ENCODE measurements at regions of chr17 and their contacts with region 1.

Region 1: GRCh38 chr17:44324571-44325275 is at the start of gene SLC25A39:
- DNase-seq: peak; percentile 88 to 98 (median 95)
- ATAC-seq: peak; percentile 70 to 75
- H3K4me3 Mint-ChIP-seq: peak within 1 kb of the TSS; percentile 88 to 95 (median 92)
- H3K27ac Mint-ChIP-seq: peak within 1 kb of the TSS; percentile 90 to 98 (median 96)
- H3K4me1 Mint-ChIP-seq: peaks cover 6 to 42% (median 16%) of the 10 kb centered on the region in 4 donors
- H3K27me3 Mint-ChIP-seq: no peaks in the 10 kb centered on the region
- polyA plus RNA-seq, gene SLC25A39: 133 to 176 (median 162) TPM

Region 2: DNA sequence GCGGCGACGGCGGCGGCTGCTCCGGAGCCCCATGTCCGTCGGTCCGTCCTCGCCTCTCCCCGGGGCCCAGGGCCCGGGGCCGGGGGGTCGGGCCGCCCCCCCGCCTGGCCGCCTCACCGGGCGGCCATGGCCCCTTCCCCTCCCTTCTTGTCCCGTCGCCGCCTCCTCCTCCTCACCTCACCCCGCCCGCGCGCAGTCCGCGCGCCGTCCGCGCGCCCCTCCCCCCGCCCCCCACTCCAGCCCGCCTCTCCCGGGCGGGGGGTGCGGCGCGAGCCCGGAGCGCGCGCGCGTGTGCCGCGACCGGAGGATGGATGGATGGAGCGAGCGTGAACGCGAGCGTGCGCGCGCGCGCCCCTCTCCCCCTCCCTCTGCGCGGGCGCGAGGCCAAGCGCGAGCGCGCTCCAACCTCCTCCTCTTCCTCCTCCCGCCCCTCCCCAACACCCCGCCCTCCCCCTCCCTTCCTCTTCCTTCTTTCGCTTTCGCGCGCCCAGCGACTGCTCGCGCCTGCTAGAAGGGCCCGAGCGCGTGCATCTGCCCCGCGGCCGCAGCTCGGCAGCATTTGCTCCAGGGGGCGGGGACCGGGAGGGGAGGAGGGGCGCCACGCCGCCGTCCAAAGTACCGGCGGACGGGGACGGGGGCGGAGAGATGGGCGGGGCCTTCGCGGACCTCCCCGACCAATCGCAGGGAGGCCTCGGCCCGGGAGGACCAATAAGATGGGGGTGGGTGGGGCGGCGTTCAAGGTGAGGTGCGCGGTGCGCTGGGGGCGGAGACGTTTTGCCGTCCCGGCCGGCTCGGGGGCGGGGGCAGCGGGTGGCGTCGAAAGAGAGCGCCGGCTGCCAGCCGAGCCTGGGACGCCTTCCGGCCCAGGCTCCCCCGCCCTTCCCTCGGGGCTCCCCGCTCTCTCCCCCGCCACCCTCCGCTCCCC is 124.9 kb before region 1 on chr17 and contains the start of gene ATXN7L3:
- POLR2A ChIA-PET with region 1: interaction called, 16 read pairs
- DNase-seq: peak; percentile 91 to 100 (median 98)
- ATAC-seq: peak; percentile 77 to 81
- H3K4me3 Mint-ChIP-seq: peak within 1 kb of the TSS; percentile 85 to 96 (median 90)
- H3K27ac Mint-ChIP-seq: peak within 1 kb of the TSS; percentile 86 to 99 (median 95)
- H3K4me1 Mint-ChIP-seq: peaks cover 39 to 59% (median 48%) of the 10 kb centered on the region in 4 donors
- H3K27me3 Mint-ChIP-seq: no peaks in the 10 kb centered on the region
- polyA plus RNA-seq, gene ATXN7L3: 9.3 to 14.2 (median 10.6) TPM